ENCODE measurements at regions of chr16 and their contacts with region 1.

Region 1: GRCh38 chr16:48164907-48165726 is 9.3 kb upstream of the ABCC12 start:
- DNase-seq: peak; percentile 86
- ATAC-seq: peak; percentile 95
- H3K4me3 Mint-ChIP-seq: no peak overlapping the region; the same call in 1 of the 2 replicates
- H3K27ac Mint-ChIP-seq: peak overlapping the region; percentile 91; the same call in 1 of the 2 replicates
- H3K4me1 Mint-ChIP-seq: peaks cover 26% of the 10 kb centered on the region
- H3K27me3 Mint-ChIP-seq: no peaks in the 10 kb centered on the region
- CTCF ChIP-seq: peak; percentile 81

Region 2: GRCh38 chr16:46947900-46948547 is 1217.1 kb before region 1 on chr16:
- CTCF ChIA-PET with region 1: interaction called, 12 read pairs
- POLR2A ChIA-PET with region 1: no interaction called
- DNase-seq: peak; percentile 24
- ATAC-seq: peak; percentile 83
- H3K4me3 Mint-ChIP-seq: no peak overlapping the region
- H3K27ac Mint-ChIP-seq: no peak overlapping the region
- H3K4me1 Mint-ChIP-seq: peaks cover 4% of the 10 kb centered on the region; the same call in 1 of the 2 replicates
- H3K27me3 Mint-ChIP-seq: no peaks in the 10 kb centered on the region
- CTCF ChIP-seq: peak; percentile 52

Region 3: GRCh38 chr16:47037746-47038458 is 1127.2 kb before region 1 on chr16:
- CTCF ChIA-PET with region 1: interaction called, 26 read pairs
- POLR2A ChIA-PET with region 1: no interaction called
- DNase-seq: peak; percentile 89
- ATAC-seq: peak; percentile 92
- H3K4me3 Mint-ChIP-seq: peak overlapping the region; percentile 77
- H3K27ac Mint-ChIP-seq: no peak overlapping the region
- H3K4me1 Mint-ChIP-seq: no peaks in the 10 kb centered on the region; the same call in 1 of the 2 replicates
- H3K27me3 Mint-ChIP-seq: peaks cover 29% of the 10 kb centered on the region
- CTCF ChIP-seq: peak; percentile 92

Region 4: GRCh38 chr16:47460711-47461597 is 704.2 kb before region 1 on chr16 and contains the starts of genes ITFG1 and PHKB:
- CTCF ChIA-PET with region 1: interaction called, 10 read pairs
- POLR2A ChIA-PET with region 1: no interaction called
- DNase-seq: peak; percentile 93
- ATAC-seq: peak; percentile 91
- H3K4me3 Mint-ChIP-seq: peak within 1 kb of the TSS; percentile 99
- H3K27ac Mint-ChIP-seq: peak within 1 kb of the TSS; percentile 99
- H3K4me1 Mint-ChIP-seq: peaks cover 34% of the 10 kb centered on the region
- H3K27me3 Mint-ChIP-seq: no peaks in the 10 kb centered on the region
- CTCF ChIP-seq: no peak
- total RNA-seq, gene ITFG1: 20.5 to 22.3 TPM (median 21.1 TPM) in 3 replicates
- total RNA-seq, gene PHKB: 43.9 to 45.9 TPM (median 44.2 TPM) in 3 replicates

Region 5: DNA sequence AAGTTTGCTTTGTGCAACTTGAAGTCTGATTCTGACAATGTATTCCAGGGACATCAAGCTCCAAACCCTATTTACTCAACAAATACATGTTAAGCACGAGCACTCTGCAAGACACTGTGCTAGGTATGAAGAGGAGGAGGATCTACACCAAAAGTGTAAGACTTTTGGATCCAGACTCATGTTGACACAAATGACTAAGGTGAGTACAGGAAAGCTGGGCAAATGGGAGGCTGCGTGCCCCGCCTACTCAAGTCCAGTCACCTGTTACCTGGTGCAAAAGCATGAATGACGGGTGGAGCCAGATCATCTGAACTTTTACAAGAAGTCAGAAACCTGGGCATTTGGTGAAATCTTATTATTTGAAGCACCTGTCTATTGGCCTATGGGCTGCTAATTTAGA is 130.0 kb before region 1 on chr16:
- CTCF ChIA-PET with region 1: no interaction called
- POLR2A ChIA-PET with region 1: no interaction called
- DNase-seq: no peak
- ATAC-seq: no peak
- H3K4me3 Mint-ChIP-seq: no peak overlapping the region
- H3K27ac Mint-ChIP-seq: no peak overlapping the region
- H3K4me1 Mint-ChIP-seq: no peaks in the 10 kb centered on the region
- H3K27me3 Mint-ChIP-seq: peaks cover 2% of the 10 kb centered on the region; the same call in 1 of the 2 replicates
- CTCF ChIP-seq: no peak

Region 6: DNA sequence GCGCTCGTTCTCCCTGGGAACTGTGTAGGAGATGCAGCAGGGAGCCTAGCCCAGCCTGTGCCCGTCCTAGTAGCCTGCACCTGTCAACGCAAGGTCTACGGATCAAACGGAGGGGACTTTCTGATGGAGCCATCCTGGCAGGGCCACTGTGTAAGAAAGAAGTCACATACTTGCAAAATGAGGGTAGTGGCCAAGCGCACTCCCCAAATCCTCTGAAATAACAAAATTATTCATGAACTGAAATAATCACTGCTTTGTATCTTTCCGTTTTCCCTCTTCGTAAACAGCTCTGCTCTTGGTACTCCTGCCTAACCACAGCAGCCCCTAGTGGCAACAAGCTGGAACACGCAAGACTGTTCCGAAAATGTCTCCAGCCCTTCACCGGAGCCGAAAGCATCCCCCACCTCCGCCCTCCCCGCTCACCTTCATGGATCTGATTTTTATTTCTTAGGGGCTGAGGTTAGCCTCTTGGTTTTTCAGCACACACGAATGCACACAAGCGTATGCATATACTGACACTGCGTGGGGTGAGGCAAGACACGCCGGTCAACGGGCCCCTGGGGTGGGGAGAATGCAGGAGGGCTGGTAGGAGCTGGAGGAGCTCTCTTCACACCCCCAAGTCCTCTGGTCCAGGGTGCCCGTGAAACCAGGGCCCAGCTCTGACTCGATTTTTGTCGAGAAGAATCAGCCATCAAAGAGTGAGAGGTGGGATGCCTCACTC is 110.1 kb before region 1 on chr16:
- CTCF ChIA-PET with region 1: interaction called, 13 read pairs
- POLR2A ChIA-PET with region 1: no interaction called
- DNase-seq: peak; percentile 66
- ATAC-seq: peak; percentile 87
- H3K4me3 Mint-ChIP-seq: peak overlapping the region; percentile 47
- H3K27ac Mint-ChIP-seq: no peak overlapping the region; the same call in 1 of the 2 replicates
- H3K4me1 Mint-ChIP-seq: peaks cover 45% of the 10 kb centered on the region
- H3K27me3 Mint-ChIP-seq: peaks cover 3% of the 10 kb centered on the region; the same call in 1 of the 2 replicates
- CTCF ChIP-seq: peak; percentile 64

Region 7: DNA sequence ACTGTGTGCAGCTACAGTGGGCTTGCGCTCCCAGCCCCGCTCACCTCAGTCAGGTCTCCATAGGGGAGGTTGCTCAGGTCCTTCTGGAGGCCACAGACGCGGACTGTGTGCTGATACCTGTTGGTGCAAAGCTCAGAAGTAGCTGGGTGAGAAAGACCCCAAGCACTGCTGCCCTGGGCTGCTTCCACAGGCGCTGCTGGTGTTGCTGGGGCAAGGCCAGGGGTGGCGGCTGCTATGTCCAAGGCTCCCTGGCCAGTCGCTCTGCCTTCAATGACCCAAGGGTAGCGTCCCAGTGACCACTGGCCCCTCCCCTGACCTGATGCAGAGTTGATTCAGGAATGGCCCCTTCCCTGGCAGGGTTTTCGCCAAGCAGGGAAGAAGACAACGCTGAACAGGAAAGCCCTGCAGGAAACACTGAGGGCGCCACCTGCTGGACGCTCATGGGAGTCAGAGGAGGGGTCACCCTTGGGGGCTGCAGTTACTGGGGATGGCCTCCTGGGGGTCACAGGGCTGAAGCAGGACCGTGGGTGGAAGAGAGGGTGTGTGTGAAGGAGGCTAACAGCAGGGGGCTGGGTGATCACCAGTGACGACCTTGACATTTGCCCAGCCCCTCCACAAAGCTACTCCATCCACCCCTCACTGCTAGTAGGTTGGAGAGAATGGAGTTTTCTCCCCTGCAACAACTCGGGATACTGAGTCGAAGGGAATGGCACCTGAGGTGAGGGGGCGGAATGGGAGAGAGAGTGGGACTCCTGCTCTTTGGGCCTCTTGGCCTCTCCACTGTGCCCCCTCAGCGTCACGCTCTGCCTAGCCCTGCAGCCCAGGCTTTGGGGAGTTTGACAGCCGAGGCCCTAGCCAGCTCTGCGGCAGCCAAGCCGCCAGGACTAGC is 47.7 kb before region 1 on chr16:
- CTCF ChIA-PET with region 1: interaction called, 15 read pairs
- POLR2A ChIA-PET with region 1: no interaction called
- DNase-seq: peak; percentile 93
- ATAC-seq: peak; percentile 96
- H3K4me3 Mint-ChIP-seq: no peak overlapping the region
- H3K27ac Mint-ChIP-seq: no peak overlapping the region
- H3K4me1 Mint-ChIP-seq: no peaks in the 10 kb centered on the region
- H3K27me3 Mint-ChIP-seq: no peaks in the 10 kb centered on the region
- CTCF ChIP-seq: peak; percentile 95

Measured in WTC11 (cell line).